ENCODE measurements at regions of chr10 and their contacts with region 1.

Region 1: DNA sequence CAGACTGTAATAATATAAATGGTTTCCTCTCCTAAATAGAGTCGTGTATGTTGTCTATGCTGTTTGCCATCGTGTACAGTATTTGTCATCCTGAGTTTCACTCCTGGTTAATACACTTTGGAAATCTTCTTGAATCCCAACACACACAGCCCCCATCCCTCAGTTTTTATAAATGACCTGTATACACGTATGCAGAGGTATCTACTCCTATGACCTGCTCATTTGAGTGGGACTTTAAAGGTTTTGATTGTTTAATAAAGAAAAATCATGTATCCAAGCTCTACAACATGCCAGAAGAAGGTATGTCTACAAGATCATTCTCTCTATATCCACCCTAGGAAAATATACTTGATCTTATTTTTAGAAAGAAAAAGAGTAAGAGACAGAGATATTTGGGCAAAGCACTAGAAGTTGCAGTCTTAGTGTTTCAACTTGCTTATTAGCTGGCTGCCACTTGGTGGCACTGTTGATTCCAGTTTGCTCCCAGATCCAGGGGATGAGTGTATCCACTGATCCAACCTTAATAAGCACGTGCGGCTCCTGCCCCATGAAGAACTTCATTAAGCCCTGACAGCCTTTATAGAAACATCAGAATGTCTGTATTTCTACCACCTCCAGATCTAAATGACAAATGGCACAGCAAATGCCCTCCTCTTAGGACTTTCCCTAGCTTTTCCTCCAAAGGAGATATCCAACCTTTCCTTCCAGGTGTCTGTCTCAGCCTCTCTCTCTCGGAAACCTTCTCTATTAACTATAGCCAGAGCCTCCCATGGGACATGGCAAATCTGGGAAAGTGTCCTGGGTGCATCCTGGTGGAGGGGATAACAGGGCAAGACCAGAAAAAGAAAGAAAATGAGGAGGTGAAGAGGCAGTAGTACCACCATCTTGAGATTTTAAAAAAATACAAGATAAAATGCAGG is 181.6 kb upstream of the NEBL start:
- DNase-seq: peak; percentile 88
- H3K4me3 Mint-ChIP-seq: no peak overlapping the region
- H3K27ac Mint-ChIP-seq: no peak overlapping the region
- H3K4me1 Mint-ChIP-seq: peaks cover 31% of the 10 kb centered on the region
- H3K27me3 Mint-ChIP-seq: no peaks in the 10 kb centered on the region
- CTCF ChIP-seq: peak; percentile 74

Region 2: GRCh38 chr10:20858292-20859124 is 220.2 kb before region 1 on chr10:
- CTCF ChIA-PET with region 1: interaction called, 11 read pairs
- POLR2A ChIA-PET with region 1: interaction called, 4 read pairs
- intact Hi-C with region 1: loop called (anchors 1 kb)
- DNase-seq: peak; percentile 53
- H3K4me3 Mint-ChIP-seq: no peak overlapping the region
- H3K27ac Mint-ChIP-seq: no peak overlapping the region
- H3K4me1 Mint-ChIP-seq: peaks cover 2% of the 10 kb centered on the region
- H3K27me3 Mint-ChIP-seq: no peaks in the 10 kb centered on the region
- CTCF ChIP-seq: peak; percentile 37

Region 3: DNA sequence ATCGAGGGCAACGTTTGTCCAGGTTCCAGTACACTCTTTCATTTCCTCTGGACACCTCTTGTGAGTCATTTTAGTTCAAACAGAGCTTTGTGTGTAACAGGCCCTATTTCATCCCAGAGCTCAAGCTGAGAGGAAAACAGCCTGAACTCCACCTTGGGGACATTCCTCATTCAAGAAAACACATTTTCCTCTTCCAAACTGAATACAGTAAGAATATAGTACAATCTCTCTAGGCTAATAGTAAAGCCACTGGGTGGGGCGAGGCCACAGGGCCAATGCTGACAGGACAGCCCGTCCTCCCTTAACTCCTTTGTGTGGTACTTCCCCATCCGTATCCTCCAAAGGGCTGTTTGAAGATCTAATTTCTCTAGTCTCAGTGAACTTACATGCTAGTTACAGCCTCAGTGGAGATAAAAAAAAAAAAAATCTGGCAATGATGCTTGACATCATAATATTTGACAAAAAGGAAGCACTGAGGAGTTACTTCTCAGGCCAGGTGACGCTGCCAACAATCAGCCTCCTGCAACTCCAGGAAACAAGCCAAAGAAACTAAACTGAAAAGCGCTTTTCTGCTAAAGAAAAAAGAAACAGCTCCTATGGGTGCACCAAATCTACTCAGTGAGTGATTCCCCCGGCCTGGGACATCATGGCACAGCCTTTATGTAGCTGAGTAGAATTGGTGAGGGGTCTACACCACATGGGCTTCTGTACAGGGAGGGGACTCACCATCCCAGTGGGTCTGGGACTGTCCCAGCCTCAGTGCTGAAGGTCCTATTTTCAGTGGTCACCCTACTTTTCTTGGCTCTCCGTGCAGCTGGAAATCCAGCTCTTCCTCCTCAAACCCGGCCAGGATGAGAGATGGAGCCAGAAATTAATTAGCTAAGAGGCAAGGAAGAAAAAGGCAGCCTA is 56.6 kb after region 1 on chr10:
- CTCF ChIA-PET with region 1: interaction called, 11 read pairs
- POLR2A ChIA-PET with region 1: interaction called, 3 read pairs
- intact Hi-C with region 1: no loop called
- DNase-seq: peak; percentile 70
- H3K4me3 Mint-ChIP-seq: peak overlapping the region; percentile 59
- H3K27ac Mint-ChIP-seq: peak overlapping the region; percentile 91
- H3K4me1 Mint-ChIP-seq: peaks cover 27% of the 10 kb centered on the region
- H3K27me3 Mint-ChIP-seq: no peaks in the 10 kb centered on the region
- CTCF ChIP-seq: no peak

Region 4: DNA sequence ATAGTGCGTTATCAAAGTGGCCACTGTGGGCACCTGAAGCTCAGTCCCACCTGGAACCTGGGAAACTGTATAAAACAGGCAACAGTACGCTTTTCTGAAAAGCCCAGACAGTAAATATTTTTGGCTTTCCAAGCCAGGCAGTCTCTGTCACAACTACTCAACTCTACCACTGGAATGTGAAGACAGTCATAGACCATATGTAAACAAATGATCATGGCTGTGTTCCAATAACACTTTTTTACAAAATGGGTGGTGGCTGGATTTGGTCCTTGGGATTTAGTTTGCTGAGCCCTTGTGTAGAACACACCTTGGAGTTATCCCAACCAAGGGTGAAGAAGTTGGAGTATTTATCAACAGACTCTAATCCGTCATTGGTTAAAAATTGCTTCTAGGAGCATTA is 187.0 kb after region 1 on chr10:
- CTCF ChIA-PET with region 1: interaction called, 120 read pairs
- POLR2A ChIA-PET with region 1: interaction called, 3 read pairs
- intact Hi-C with region 1: loop called (anchors 1 kb)
- DNase-seq: peak; percentile 83
- H3K4me3 Mint-ChIP-seq: peak overlapping the region; percentile 35
- H3K27ac Mint-ChIP-seq: peak overlapping the region; percentile 93
- H3K4me1 Mint-ChIP-seq: peaks cover 20% of the 10 kb centered on the region
- H3K27me3 Mint-ChIP-seq: no peaks in the 10 kb centered on the region
- CTCF ChIP-seq: no peak

Region 5: DNA sequence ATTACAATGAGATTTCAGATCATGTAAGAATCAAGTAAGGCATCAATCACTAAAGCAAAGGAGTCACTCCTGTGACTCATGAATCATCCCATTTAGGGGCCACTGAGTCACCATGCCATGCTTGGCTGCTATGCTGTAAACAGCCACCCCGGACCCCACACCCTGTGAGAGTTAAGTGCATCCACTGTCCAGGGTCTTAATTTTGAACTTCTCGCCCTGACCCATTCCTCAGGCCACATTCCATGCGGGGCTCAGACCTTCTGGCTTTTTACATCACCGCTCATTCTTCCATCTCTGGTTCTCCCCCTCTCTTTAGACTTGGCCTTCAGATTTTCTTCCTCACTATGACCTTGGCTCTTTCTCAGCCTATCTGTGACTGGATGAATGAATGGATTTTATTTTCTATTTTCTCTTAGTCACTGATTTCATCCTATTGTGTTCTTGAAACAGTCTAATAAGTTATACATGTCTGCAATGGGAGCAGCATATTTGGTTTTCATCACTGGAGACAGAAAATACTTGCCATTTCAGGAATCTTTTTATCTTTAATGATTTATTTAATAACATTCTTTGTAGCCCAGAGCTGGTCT is 207.2 kb after region 1 on chr10:
- CTCF ChIA-PET with region 1: no interaction called
- POLR2A ChIA-PET with region 1: no interaction called
- intact Hi-C with region 1: no loop called
- DNase-seq: no peak
- H3K4me3 Mint-ChIP-seq: no peak overlapping the region
- H3K27ac Mint-ChIP-seq: peak overlapping the region; percentile 68
- H3K4me1 Mint-ChIP-seq: peaks cover 16% of the 10 kb centered on the region
- H3K27me3 Mint-ChIP-seq: no peaks in the 10 kb centered on the region
- CTCF ChIP-seq: no peak

Region 6: DNA sequence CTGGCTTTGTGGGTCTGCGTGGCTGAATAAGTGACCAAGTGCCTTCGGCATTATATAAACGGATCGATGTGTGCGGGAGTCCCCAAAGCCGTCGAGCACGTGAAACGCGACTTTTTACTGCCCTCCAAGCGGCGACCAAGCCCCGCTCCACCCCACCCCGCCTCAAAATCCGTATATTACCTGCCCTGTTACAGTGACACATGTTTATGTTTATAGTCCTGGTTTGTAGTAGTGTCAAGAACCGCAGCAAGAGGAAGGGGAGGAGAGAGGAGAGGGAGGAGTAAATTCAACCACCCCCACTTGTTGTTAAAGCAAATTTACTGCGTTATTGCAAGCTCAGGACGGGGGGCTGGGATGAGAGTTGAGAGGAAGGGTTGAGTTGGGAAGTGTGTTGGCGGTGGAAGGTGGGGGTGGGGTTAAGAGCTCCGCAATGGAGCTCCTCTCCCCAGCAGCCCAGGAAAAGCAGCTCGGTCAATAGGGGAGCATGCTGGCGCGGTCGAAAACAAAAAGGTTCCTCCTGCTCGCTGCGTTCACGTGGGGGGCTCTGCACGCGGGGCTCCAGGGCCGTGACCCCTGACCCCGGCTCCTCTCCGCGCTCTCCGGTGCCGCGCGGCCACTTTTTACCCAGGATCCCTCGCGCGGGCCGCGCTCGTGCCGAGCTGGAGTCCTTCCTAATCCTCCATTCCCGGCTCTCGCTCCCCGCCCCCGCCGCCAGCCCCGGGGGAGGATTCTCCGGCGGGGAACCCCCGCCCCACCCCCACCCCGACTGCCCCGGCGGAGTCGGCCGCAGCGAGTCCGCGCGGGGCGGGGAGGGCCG is 446.9 kb after region 1 on chr10 and contains the start of gene SKIDA1:
- CTCF ChIA-PET with region 1: no interaction called
- POLR2A ChIA-PET with region 1: no interaction called
- intact Hi-C with region 1: loop called (anchors 5 kb)
- DNase-seq: peak; percentile 84
- H3K4me3 Mint-ChIP-seq: peak within 1 kb of the TSS; percentile 97
- H3K27ac Mint-ChIP-seq: peak within 1 kb of the TSS; percentile 100
- H3K4me1 Mint-ChIP-seq: peaks cover 10% of the 10 kb centered on the region
- H3K27me3 Mint-ChIP-seq: no peaks in the 10 kb centered on the region
- CTCF ChIP-seq: no peak
- total RNA-seq, gene SKIDA1: 0.56 and 1.2 TPM in 2 replicates

Region 7: DNA sequence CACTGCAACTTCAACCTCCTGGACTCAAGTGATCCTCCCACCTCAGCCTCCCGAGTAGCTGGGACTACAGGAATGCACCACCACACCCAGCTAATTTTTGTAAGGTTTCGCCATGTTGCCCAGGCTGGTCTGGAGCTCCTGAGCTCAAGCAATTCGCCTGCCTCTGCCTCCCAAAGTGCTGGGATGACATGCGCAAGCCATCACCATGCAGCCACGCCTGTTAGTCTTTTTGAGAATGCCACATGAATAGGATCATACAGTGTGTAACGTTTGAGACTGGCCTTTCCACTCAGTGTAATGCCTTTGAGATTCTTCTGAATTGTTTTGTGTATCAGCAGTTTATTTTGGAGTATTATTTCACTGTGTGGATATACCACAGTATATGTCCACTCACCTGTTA is 1941.0 kb after region 1 on chr10:
- CTCF ChIA-PET with region 1: no interaction called
- POLR2A ChIA-PET with region 1: no interaction called
- intact Hi-C with region 1: no loop called
- DNase-seq: no peak
- H3K4me3 Mint-ChIP-seq: no peak overlapping the region
- H3K27ac Mint-ChIP-seq: no peak overlapping the region
- H3K4me1 Mint-ChIP-seq: no peaks in the 10 kb centered on the region
- H3K27me3 Mint-ChIP-seq: peaks cover 45% of the 10 kb centered on the region
- CTCF ChIP-seq: no peak